ENCODE measurements at regions of chr9 and their contacts with region 1.

Region 1: DNA sequence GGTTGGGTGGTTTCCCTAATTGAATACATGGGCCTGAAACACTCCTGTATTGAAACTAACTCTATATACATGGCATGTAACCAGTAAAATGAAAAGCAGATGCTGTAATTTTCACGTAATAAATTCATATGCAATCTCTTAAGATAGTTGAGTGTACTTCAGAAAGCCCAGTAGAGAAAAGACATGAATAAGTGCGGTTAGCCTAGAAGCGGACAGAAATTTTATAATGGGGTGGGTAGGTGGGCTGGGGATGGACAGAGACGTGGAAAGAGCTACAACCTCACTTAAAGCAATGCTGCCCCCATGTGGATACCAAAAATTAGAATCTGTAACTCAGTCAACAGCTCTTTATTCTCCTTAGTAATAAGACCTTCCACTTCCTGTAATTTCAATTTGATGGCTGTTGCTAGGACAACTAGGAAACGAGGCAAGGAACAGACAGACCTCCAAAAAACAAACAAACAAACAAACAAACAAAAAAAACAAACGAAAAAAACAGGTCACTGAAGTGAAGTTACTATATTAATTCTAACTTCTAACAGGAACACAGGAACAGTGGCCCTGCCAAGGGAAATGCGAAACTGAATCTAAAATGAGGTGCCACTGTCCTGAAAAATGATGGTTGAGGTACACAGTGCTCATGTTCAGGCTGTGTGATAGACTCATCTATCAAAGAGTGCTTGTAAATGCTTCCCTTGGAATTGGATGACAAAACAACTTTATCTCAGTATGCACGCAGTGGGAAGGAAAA is 103.4 kb upstream of the GNA14 start:
- DNase-seq: peak; percentile 26
- H3K4me3 ChIP-seq: no peak overlapping the region
- H3K27ac ChIP-seq: no peak overlapping the region
- H3K27me3 ChIP-seq: no peaks in the 10 kb centered on the region
- CTCF ChIP-seq: peak; percentile 63

Region 2: GRCh38 chr9:77261605-77262004 is 489.9 kb before region 1 on chr9:
- CTCF ChIA-PET with region 1: no interaction called
- POLR2A ChIA-PET with region 1: no interaction called
- DNase-seq: no peak
- H3K4me3 ChIP-seq: no peak overlapping the region
- H3K27ac ChIP-seq: no peak overlapping the region
- H3K27me3 ChIP-seq: no peaks in the 10 kb centered on the region
- CTCF ChIP-seq: no peak

Region 3: GRCh38 chr9:77463151-77463550 is 288.4 kb before region 1 on chr9:
- CTCF ChIA-PET with region 1: interaction called, 83 read pairs
- POLR2A ChIA-PET with region 1: no interaction called
- DNase-seq: no peak
- H3K4me3 ChIP-seq: no peak overlapping the region
- H3K27ac ChIP-seq: no peak overlapping the region
- H3K27me3 ChIP-seq: no peaks in the 10 kb centered on the region
- CTCF ChIP-seq: no peak

Region 4: GRCh38 chr9:77764894-77765780 is 13.6 kb after region 1 on chr9:
- CTCF ChIA-PET with region 1: interaction called, 19 read pairs
- POLR2A ChIA-PET with region 1: no interaction called
- DNase-seq: peak; percentile 50
- H3K4me3 ChIP-seq: no peak overlapping the region
- H3K27ac ChIP-seq: no peak overlapping the region
- H3K27me3 ChIP-seq: no peaks in the 10 kb centered on the region
- CTCF ChIP-seq: peak; percentile 73

Measured in AG04450 (cell line).